H1 (cell line): ENCODE measurements at regions of chr2 and their contacts with region 1.

Region 1: GRCh38 chr2:71592181-71592711 is 138.9 kb downstream of the DYSF start:
- DNase-seq: no peak
- H3K4me3 ChIP-seq: no peak overlapping the region
- H3K27ac ChIP-seq: no peak overlapping the region
- H3K4me1 ChIP-seq: peaks cover 0 to 7% (median 3%) of the 10 kb centered on the region in 4 experiments; a peak in 3 of 7 replicates
- H3K27me3 ChIP-seq: no peaks in the 10 kb centered on the region
- CTCF ChIP-seq: no peak
- EP300 ChIP-seq: no peak
- POLR2A ChIP-seq: no peak
- RAD21 ChIP-seq: no peak

Region 2: GRCh38 chr2:71581026-71581425 is 11.2 kb before region 1 on chr2:
- CTCF ChIA-PET with region 1: interaction called, 13 read pairs
- POLR2A ChIA-PET with region 1: no interaction called
- DNase-seq: no peak
- H3K4me3 ChIP-seq: no peak overlapping the region
- H3K27ac ChIP-seq: no peak overlapping the region
- H3K4me1 ChIP-seq: no peaks in the 10 kb centered on the region
- H3K27me3 ChIP-seq: no peaks in the 10 kb centered on the region
- CTCF ChIP-seq: no peak
- EP300 ChIP-seq: no peak
- POLR2A ChIP-seq: no peak
- RAD21 ChIP-seq: no peak